OCI-LY7 (cell line): ENCODE measurements at regions of chr10 and their contacts with region 1.

Region 1: GRCh38 chr10:11270135-11270857 is 252.6 kb downstream of the CELF2 start:
- DNase-seq: peak; percentile 82
- H3K4me3 ChIP-seq: no peak overlapping the region
- H3K27ac ChIP-seq: no peak overlapping the region
- H3K4me1 ChIP-seq: peaks cover 16% of the 10 kb centered on the region
- CTCF ChIP-seq: peak; percentile 98

Region 2: GRCh38 chr10:9331583-9332008 is 1938.7 kb before region 1 on chr10:
- CTCF ChIA-PET with region 1: no interaction called
- POLR2A ChIA-PET with region 1: no interaction called
- intact Hi-C with region 1: loop called (anchors 2 kb)
- DNase-seq: peak; percentile 66
- H3K4me3 ChIP-seq: no peak overlapping the region
- H3K27ac ChIP-seq: no peak overlapping the region
- H3K4me1 ChIP-seq: no peaks in the 10 kb centered on the region
- CTCF ChIP-seq: peak; percentile 93

Region 3: GRCh38 chr10:10996966-10997620 is 273.2 kb before region 1 on chr10:
- CTCF ChIA-PET with region 1: no interaction called
- POLR2A ChIA-PET with region 1: no interaction called
- intact Hi-C with region 1: loop called (anchors 10 kb)
- DNase-seq: no peak
- H3K4me3 ChIP-seq: no peak overlapping the region
- H3K27ac ChIP-seq: no peak overlapping the region
- H3K4me1 ChIP-seq: no peaks in the 10 kb centered on the region
- CTCF ChIP-seq: no peak

Region 4: DNA sequence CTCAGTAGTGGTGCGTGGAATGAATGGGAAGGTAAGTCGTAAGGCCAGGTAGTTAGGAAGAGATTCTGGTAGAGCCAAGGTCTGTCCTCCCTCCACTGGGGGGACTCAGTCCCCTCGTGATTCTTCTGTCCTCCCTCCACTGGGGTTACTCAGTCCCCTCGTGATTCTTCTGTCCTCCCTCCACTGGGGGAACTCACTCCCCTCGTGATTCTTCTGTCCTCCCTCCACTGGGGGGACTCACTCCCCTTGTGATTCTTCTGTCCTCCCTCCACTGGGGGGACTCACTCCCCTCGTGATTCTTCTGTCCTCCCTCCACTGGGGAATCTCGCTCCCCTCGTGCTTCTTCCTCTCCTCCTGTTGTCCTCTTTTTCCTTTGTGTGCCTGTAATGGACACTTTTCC is 127.5 kb before region 1 on chr10:
- CTCF ChIA-PET with region 1: no interaction called
- POLR2A ChIA-PET with region 1: no interaction called
- intact Hi-C with region 1: loop called (anchors 1 kb)
- DNase-seq: peak; percentile 33
- H3K4me3 ChIP-seq: no peak overlapping the region
- H3K27ac ChIP-seq: no peak overlapping the region
- H3K4me1 ChIP-seq: peaks cover 14% of the 10 kb centered on the region
- CTCF ChIP-seq: peak; percentile 52; the same call in 1 of the 2 replicates

Region 5: DNA sequence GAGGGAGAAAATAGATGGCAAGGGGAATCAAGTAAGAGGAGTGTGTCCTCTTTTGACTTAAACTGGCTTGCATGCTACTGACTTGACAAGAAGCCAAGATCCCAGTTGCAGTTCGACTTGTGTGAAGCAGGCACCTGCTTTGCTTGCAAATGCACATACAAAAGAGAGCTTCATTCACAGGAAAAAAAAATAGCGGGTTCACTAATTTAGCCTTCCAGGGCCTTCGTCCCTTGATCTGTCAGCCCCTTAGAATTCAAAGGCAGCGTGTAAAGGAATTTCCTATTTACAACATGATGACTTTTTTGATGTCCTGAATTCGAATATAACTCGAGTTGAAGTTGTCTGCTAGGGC is 60.5 kb before region 1 on chr10:
- CTCF ChIA-PET with region 1: no interaction called
- POLR2A ChIA-PET with region 1: no interaction called
- intact Hi-C with region 1: no loop called
- DNase-seq: no peak
- H3K4me3 ChIP-seq: no peak overlapping the region
- H3K27ac ChIP-seq: no peak overlapping the region
- H3K4me1 ChIP-seq: no peaks in the 10 kb centered on the region
- CTCF ChIP-seq: no peak

Region 6: DNA sequence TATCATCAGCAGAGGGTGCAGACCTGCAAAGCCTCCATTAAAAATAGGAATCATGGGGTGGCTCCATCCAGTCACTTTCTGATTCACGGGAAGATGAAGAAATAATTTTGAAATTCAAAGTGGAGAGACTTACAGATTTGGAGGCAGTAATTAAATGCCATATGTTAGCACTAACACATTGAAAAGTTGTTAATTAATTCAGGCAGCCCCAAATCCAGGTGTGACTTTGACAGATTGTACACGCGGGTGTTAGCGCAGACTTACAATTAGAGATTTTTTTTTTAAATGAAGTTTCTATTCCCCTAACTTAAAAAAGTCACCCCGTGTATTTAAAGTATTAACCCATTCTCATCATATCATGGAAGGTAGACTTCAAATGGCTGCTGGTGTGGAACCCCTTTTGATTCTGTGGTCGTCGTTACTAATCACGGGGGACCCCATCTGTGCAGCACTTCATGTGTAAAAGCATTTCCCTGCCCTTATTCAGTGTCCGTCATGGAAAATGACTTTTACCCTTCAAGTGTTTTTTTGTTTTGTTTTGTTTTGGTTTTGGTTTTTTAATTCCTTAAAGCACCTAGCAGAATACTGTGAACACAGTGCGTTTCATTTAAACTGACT is 16.8 kb before region 1 on chr10:
- CTCF ChIA-PET with region 1: no interaction called
- POLR2A ChIA-PET with region 1: no interaction called
- intact Hi-C with region 1: no loop called
- DNase-seq: no peak
- H3K4me3 ChIP-seq: no peak overlapping the region
- H3K27ac ChIP-seq: no peak overlapping the region
- H3K4me1 ChIP-seq: peaks cover 34% of the 10 kb centered on the region
- CTCF ChIP-seq: no peak

Region 7: GRCh38 chr10:11472158-11472753 is 202.0 kb after region 1 on chr10:
- CTCF ChIA-PET with region 1: no interaction called
- POLR2A ChIA-PET with region 1: no interaction called
- intact Hi-C with region 1: loop called (anchors 2 kb)
- DNase-seq: peak; percentile 73
- H3K4me3 ChIP-seq: no peak overlapping the region
- H3K27ac ChIP-seq: no peak overlapping the region
- H3K4me1 ChIP-seq: peaks cover 14% of the 10 kb centered on the region
- CTCF ChIP-seq: peak; percentile 97